Activated B cell treated with CpG ODN at 0.5 μM for 24 hours (primary cell): ENCODE measurements at regions of chr6 and their contacts with region 1.

Region 1: DNA sequence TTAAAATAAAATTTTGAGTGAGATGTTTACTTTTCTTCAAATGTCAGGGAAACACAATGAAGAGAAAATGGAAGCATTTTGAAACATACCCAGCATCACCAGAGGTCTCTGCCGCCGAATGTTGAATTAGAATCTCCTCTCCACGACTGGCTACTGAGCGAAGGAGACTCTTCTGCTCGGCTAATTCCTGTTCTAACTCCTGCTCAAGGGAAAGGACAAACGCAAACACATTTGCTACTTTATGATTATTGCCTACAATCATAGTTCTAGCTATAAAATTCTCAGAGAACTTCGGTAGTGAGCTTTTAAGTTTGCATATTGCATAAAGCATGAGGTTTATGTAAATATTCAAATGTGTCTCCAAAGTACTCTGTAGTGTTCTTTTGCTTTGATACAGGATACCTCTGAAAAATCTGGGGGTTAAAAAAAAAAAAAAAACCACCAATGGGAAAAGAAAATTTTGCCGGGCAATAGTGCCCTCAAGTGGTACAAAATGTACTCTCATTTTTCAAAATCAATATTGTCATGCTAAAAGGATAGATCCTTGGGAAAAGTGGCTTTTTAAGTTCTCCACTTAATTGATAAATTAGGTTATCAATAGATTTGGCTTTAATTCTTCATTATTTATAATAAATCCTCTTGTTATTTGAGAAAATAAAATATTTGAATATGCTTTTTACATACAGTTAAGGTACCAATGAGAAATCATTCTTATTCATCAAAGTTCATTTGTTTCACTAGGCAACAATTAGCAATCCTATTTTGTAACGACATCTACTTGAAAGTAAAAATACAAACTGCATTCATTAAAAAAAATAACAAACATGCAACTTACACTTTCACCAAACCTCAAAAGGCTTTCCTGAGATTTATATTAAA is 369.0 kb downstream of the SYNE1 start:
- DNase-seq: no peak
- ATAC-seq: no peak
- H3K4me3 Mint-ChIP-seq: no peak overlapping the region
- H3K27ac Mint-ChIP-seq: no peak overlapping the region
- H3K4me1 Mint-ChIP-seq: no peaks in the 10 kb centered on the region
- H3K27me3 Mint-ChIP-seq: no peaks in the 10 kb centered on the region
- CTCF ChIP-seq: no peak

Region 2: GRCh38 chr6:151647976-151648639 is 620.1 kb before region 1 on chr6:
- CTCF ChIA-PET with region 1: interaction called, 3 read pairs
- POLR2A ChIA-PET with region 1: no interaction called
- intact Hi-C with region 1: loop called (anchors 1 kb)
- DNase-seq: no peak
- ATAC-seq: no peak
- H3K4me3 Mint-ChIP-seq: no peak overlapping the region
- H3K27ac Mint-ChIP-seq: no peak overlapping the region
- H3K4me1 Mint-ChIP-seq: no peaks in the 10 kb centered on the region
- H3K27me3 Mint-ChIP-seq: peaks cover 25% of the 10 kb centered on the region
- CTCF ChIP-seq: no peak

Region 3: GRCh38 chr6:151675746-151676416 is 592.3 kb before region 1 on chr6:
- CTCF ChIA-PET with region 1: interaction called, 11 read pairs
- POLR2A ChIA-PET with region 1: no interaction called
- intact Hi-C with region 1: loop called (anchors 1 kb)
- DNase-seq: peak; percentile 32
- ATAC-seq: peak; percentile 89
- H3K4me3 Mint-ChIP-seq: no peak overlapping the region
- H3K27ac Mint-ChIP-seq: no peak overlapping the region
- H3K4me1 Mint-ChIP-seq: peaks cover 4% of the 10 kb centered on the region
- H3K27me3 Mint-ChIP-seq: no peaks in the 10 kb centered on the region
- CTCF ChIP-seq: peak; percentile 74

Region 4: DNA sequence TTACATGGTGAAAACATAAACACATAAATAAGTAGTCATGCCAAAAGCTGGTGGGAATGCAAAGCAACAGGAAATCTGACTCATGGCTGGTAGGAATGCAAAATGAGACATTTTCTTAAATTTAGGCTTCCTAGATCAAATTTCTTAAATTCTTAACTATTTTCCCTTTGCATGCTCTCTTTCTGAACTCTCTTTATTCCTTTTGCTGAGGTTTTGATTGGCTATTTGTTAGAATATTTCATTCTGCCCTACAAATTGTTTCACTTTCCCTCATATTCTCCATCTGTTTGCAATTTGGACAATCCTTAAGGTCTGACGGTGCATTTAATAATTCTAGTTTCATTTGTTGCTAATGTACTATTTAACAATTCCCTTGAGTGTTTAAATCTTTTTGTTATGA is 1300.4 kb after region 1 on chr6:
- CTCF ChIA-PET with region 1: no interaction called
- POLR2A ChIA-PET with region 1: no interaction called
- intact Hi-C with region 1: no loop called
- DNase-seq: no peak
- ATAC-seq: no peak
- H3K4me3 Mint-ChIP-seq: no peak overlapping the region
- H3K27ac Mint-ChIP-seq: no peak overlapping the region
- H3K4me1 Mint-ChIP-seq: no peaks in the 10 kb centered on the region
- H3K27me3 Mint-ChIP-seq: no peaks in the 10 kb centered on the region
- CTCF ChIP-seq: no peak